Dendritic cell treated with granulocyte-macrophage colony-stimulating factor and Interleukin-4, amounts not matched to agents 40 ng/mL and 50 ng/mL, for 4 days (primary cell): ENCODE measurements at regions of chr13 and their contacts with region 1.

Region 1: DNA sequence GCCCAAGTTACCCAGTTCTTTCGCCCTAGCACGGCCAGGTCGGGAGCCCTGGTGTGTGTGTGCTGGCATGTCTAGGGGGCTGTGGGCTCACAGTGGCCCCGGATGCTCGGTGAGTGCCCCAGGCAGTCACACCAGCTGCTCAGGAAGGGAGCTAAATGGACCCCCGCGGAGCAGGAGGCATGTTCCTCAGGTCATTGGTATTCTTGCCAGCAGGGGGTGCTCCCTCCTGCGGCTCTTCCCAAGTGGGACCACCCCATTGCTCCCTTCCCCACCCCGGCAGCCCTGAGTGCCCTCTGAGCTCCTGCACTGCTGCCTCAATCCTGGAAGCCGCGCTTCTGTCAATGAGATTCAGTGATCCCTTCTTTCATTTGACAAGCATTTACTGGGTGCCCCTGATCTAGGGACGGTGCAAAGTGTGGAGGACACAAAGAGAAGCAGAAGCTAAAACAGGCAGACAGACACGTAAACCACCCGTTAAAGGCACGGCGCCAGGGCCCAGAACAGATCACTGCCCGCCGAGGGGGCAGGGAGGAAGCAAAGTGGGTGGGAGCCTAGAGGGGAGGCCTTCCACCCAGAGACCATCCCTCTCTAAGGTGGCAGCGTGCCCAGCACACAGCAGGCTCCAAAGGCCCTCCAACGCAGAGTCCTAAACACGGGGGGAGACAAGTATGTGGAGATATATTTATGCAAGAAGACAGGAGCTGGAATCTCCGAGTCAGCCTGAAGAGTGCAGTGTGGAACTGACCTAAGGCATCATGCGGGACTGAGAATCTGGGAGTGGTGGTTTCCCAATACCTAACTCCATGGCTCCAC is 5.2 kb upstream of the ADPRHL1 start:
- H3K4me3 Mint-ChIP-seq: no peak overlapping the region
- H3K27ac Mint-ChIP-seq: no peak overlapping the region
- H3K4me1 Mint-ChIP-seq: no peaks in the 10 kb centered on the region
- H3K27me3 Mint-ChIP-seq: no peaks in the 10 kb centered on the region

Region 2: GRCh38 chr13:113562085-113562749 is 103.8 kb after region 1 on chr13:
- intact Hi-C with region 1: loop called (anchors 5 kb)
- H3K4me3 Mint-ChIP-seq: no peak overlapping the region
- H3K27ac Mint-ChIP-seq: no peak overlapping the region
- H3K4me1 Mint-ChIP-seq: peaks cover 21% of the 10 kb centered on the region
- H3K27me3 Mint-ChIP-seq: peaks cover 15% of the 10 kb centered on the region